Activated T-helper 1 cell treated with anti-CD3 and anti-CD28 coated beads, Interleukin-12 subunit alpha, Interleukin-12 subunit beta, Interleukin-2, Interleukin-4 antibody, amounts not matched to agents 30 ng/mL and 10 ng/mL and 1 ng/mL, durations not matched to agents 14 hours and 24 hours and 36 hours (primary cell): ENCODE measurements at regions of chr3 and their contacts with region 1.

Region 1: GRCh38 chr3:188400494-188401243 is 246.7 kb downstream of the LPP start:
- DNase-seq: peak; percentile 22
- H3K4me3 Mint-ChIP-seq: no peak overlapping the region
- H3K27ac Mint-ChIP-seq: peak overlapping the region; percentile 63
- H3K4me1 Mint-ChIP-seq: peaks cover 73% of the 10 kb centered on the region
- H3K27me3 Mint-ChIP-seq: peaks cover 4% of the 10 kb centered on the region

Region 2: DNA sequence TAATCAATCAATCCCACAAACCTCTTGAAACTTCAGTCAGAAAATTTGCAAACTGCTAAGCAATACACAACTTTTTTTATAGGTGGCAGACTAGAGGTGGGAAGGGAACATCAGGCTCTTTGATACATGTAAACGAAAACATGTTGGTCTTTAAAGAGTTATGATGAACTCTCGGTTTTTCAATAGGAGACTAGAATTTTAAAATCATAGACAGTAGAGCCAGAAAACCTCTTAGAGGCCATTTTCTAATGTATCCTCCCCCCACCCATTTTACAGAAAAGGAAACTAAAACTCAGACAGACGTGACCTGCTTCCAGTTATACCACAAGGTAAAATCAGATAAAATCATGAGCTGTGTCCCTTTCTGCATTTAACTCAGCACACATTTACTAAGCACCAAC is 425.8 kb before region 1 on chr3:
- intact Hi-C with region 1: loop called (anchors 10 kb)
- DNase-seq: no peak
- H3K4me3 Mint-ChIP-seq: peak overlapping the region; percentile 59
- H3K27ac Mint-ChIP-seq: peak overlapping the region; percentile 94
- H3K4me1 Mint-ChIP-seq: peaks cover 62% of the 10 kb centered on the region
- H3K27me3 Mint-ChIP-seq: peaks cover 2% of the 10 kb centered on the region

Region 3: DNA sequence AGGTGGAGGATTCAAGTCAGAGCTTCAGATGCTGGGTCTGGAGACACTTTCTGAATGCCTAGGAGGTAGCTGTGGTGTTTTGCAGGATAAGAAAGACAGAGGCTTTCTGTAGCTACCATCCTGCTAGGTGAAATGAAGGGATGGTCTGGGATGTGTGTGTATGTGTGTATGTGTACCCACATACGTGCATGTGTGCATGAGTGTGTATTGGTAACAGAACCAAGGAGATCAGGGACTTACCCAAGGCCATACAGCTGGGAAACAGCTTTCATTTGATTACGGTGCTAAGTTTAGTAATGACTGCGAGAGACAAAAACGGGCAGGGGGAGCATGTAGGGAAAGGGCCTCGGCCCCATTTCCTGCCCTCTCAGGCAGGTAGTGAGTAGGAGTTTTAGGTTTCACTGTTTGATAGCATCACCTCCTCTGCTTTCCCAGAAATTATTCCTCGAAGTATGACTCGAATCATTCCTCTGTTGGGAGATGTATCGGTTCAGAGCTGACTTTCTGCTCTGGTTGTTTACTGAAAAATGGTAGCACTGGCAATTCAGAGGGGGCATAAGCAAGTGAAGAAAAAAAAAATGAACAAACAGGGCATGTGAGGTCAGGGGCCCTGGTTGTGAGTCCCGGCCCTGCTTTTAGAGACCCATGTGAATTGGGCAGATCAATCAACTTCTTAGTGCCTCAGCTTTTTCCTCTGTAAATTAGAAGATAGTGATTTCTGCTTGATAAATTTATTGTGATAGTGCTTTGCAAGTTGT is 116.0 kb before region 1 on chr3:
- intact Hi-C with region 1: loop called (anchors 1 kb)
- DNase-seq: peak; percentile 26
- H3K4me3 Mint-ChIP-seq: peak overlapping the region; percentile 57
- H3K27ac Mint-ChIP-seq: peak overlapping the region; percentile 90
- H3K4me1 Mint-ChIP-seq: peaks cover 55% of the 10 kb centered on the region
- H3K27me3 Mint-ChIP-seq: peaks cover 2% of the 10 kb centered on the region

Region 4: DNA sequence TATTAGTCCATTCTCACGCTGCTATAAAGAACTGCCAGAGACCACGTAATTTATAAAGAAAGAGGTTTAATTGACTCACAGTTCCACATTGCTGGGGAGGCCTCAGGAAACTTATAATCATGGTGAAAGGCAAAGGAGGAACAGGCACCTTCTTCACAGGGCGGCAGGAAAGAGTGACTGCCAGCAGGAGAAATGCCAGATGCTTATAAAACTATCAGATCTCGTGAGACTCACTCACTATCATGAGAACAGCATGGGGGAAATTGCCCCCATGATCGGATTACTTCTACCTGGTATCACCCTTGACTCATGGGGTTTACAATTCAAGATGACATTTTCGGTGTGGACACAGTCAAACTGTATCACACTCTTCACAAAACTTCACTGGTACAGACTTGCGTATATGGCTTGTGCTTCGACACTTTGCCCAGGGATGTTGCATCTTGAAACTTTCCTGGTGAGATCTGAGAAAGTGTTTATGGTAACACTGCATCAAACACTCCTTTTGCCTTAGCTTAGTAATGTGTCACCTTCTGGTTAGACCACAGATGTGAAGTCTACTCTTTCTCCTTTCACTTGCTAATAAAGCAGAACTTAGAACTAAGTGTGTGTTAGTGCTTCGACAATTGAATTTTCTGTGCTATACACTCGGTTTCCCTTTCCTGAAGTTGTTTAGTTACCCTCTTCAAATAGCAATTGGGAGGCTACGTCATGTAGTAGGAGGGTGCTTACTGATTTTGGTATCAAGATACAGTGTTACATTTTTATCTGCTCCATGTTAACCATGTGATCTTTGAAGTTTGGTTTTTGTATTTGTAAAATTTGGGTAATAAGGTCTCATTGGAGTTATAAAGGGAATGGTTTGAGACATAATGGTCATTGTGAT is 61.0 kb before region 1 on chr3:
- intact Hi-C with region 1: loop called (anchors 1 kb)
- DNase-seq: peak; percentile 39
- H3K4me3 Mint-ChIP-seq: peak overlapping the region; percentile 63
- H3K27ac Mint-ChIP-seq: peak overlapping the region; percentile 86
- H3K4me1 Mint-ChIP-seq: peaks cover 37% of the 10 kb centered on the region
- H3K27me3 Mint-ChIP-seq: peaks cover 24% of the 10 kb centered on the region

Region 5: GRCh38 chr3:188417271-188417696 is 16.6 kb after region 1 on chr3:
- intact Hi-C with region 1: loop called (anchors 2 kb)
- DNase-seq: no peak
- H3K4me3 Mint-ChIP-seq: no peak overlapping the region
- H3K27ac Mint-ChIP-seq: no peak overlapping the region
- H3K4me1 Mint-ChIP-seq: peaks cover 32% of the 10 kb centered on the region
- H3K27me3 Mint-ChIP-seq: no peaks in the 10 kb centered on the region

Region 6: GRCh38 chr3:188683032-188683521 is 282.4 kb after region 1 on chr3:
- intact Hi-C with region 1: loop called (anchors 5 kb)
- DNase-seq: no peak
- H3K4me3 Mint-ChIP-seq: no peak overlapping the region
- H3K27ac Mint-ChIP-seq: peak overlapping the region; percentile 74
- H3K4me1 Mint-ChIP-seq: peaks cover 28% of the 10 kb centered on the region
- H3K27me3 Mint-ChIP-seq: no peaks in the 10 kb centered on the region

Region 7: DNA sequence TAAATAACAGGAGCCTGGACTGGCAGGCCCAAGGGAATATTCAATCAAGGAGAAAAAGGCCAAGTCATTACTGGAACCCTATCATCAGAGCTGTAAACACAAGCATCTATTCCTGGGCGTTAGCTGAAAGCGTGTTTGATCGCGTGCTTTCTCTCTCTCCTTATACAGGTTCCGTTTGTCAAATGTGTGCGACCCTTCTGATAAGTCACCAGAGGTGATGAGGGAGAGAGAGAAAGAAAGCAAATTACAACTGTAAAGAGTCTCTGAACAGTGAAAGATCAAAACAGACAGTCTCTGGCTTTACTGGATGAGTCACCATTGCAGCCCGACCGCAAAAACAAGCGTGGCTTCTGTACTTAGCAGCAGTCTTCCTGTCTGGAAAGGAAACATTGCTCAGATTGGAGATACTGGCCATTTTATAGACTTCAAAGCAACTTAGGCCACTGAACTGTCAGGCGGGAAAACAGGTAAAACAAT is 731.6 kb after region 1 on chr3:
- intact Hi-C with region 1: loop called (anchors 5 kb)
- DNase-seq: peak; percentile 75
- H3K4me3 Mint-ChIP-seq: peak overlapping the region; percentile 69
- H3K27ac Mint-ChIP-seq: peak overlapping the region; percentile 76
- H3K4me1 Mint-ChIP-seq: peaks cover 28% of the 10 kb centered on the region
- H3K27me3 Mint-ChIP-seq: no peaks in the 10 kb centered on the region

Region 8: DNA sequence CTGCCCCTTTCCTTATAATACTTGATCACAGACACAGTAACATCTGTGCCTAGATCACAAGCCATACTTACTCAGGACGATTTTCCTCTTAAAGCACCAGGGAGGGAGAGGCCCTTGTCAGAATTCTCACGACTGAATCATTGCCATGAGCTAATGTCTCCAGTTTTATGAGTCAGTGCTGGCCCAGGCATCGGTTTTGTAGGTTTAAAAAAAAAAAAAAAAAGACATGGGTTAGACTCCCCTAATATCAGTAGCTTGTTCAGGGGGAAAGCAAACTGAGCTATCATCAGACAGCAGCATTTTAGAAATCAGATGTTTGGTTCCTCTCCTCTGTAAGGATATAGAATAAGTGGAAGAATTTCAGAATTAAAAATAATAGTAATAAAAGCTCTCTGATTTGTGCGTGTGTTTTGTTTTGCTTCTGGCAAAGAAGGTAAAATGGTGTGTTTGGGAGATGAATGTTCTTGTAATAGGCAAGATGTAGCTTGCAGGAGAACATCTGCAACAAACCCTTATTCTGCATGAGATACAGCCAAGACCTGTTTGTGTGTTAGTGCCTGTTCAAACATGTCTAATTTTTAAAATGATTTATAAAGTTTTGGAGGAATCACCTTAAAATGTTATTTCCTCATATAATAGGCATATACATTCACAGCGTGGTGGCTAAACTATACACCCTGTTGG is 1424.1 kb after region 1 on chr3:
- intact Hi-C with region 1: no loop called
- DNase-seq: no peak
- H3K4me3 Mint-ChIP-seq: no peak overlapping the region
- H3K27ac Mint-ChIP-seq: no peak overlapping the region
- H3K4me1 Mint-ChIP-seq: peaks cover 5% of the 10 kb centered on the region
- H3K27me3 Mint-ChIP-seq: no peaks in the 10 kb centered on the region